Activated B cell treated with CpG ODN at 0.5 μM for 24 hours (primary cell): ENCODE measurements at regions of chr6 and their contacts with region 1.

Region 1: DNA sequence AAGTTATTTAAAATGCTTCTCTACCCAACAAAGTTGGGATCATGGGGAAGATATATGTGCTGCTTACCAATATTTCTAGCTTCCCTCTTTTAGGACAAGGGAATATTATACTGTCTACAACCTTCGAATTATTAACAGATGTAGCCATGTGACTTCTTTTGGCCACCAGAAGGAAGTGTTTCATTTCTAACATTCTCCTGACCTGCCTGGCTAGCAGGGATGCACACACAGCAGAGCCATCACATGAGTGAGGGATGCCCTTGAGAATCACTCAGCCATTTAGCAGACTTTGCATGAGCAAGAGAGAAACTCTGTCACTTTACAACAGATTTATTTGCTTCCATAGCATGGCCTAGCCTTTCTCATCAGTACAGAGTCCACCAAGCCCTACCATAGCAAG is 230.7 kb upstream of the MARCKS start:
- DNase-seq: no peak
- ATAC-seq: no peak
- H3K4me3 Mint-ChIP-seq: no peak overlapping the region
- H3K27ac Mint-ChIP-seq: peak overlapping the region; percentile 78
- H3K4me1 Mint-ChIP-seq: peaks cover 75% of the 10 kb centered on the region
- H3K27me3 Mint-ChIP-seq: no peaks in the 10 kb centered on the region
- CTCF ChIP-seq: no peak

Region 2: DNA sequence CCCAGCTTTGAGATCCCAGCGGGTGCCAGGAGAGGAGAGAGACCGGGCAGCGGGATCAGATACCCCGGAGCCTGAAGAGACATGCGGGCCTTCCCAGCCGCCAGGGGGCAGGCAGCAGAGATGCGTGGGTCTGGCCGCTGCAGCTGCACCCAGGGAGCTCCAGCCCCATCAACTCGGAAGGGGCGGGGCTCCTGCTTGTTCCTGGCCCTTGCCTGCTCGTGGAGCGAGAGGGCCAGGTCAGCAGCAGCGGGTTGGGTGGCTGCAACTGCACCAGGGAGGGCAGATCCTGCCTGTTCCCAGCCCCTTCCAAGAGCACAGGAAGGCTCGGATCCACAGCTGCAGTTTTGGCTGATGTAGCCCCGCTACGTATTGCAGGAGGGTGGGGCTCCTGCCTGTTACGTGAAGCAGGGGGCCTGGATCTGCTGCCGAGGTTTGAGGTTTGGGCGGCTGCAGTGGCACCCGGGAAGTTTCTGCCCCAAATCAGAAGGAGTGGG is 746.5 kb before region 1 on chr6:
- CTCF ChIA-PET with region 1: no interaction called
- POLR2A ChIA-PET with region 1: no interaction called
- intact Hi-C with region 1: no loop called
- DNase-seq: no peak
- ATAC-seq: peak; percentile 62
- H3K4me3 Mint-ChIP-seq: peak overlapping the region; percentile 33
- H3K27ac Mint-ChIP-seq: no peak overlapping the region
- H3K4me1 Mint-ChIP-seq: no peaks in the 10 kb centered on the region
- H3K27me3 Mint-ChIP-seq: peaks cover 2% of the 10 kb centered on the region
- CTCF ChIP-seq: no peak

Region 3: DNA sequence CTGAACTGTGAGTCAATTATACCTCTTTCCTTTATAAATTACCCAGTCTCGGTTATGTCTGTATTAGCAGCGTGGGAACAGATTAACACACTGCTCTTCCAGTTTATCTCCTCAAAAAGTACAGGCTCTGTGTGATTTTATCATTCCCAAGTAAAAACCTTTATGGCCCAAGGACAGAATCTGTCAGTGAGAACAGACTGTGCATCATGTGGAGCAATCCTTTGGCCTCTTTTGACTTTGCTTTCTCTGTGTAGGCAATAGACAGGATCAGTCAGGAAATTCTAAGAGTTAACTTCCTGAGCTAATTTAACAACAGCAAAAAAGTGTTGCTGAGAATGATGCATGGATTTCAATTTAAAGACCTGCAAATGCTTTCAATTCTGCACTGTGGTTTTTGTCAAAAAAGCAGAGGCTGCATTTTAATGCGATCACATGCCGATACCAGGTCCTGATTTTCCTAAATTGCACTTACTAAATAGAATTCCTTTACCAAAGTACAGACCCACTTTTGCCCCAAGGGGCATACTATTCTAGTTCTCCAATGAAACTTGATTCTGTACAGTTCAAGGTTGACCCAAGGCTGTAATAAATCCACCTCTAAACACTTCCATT is 16.0 kb before region 1 on chr6:
- CTCF ChIA-PET with region 1: interaction called, 3 read pairs
- POLR2A ChIA-PET with region 1: no interaction called
- intact Hi-C with region 1: loop called (anchors 2 kb)
- DNase-seq: no peak
- ATAC-seq: no peak
- H3K4me3 Mint-ChIP-seq: no peak overlapping the region
- H3K27ac Mint-ChIP-seq: no peak overlapping the region
- H3K4me1 Mint-ChIP-seq: no peaks in the 10 kb centered on the region
- H3K27me3 Mint-ChIP-seq: no peaks in the 10 kb centered on the region
- CTCF ChIP-seq: no peak